ENCODE measurements at regions of chr9 and their contacts with region 1.

Region 1: GRCh38 chr9:114653556-114654159 is 3.9 kb downstream of the TEX53 start:
- DNase-seq: peak; percentile 74 to 88 (median 81)
- ATAC-seq: peak; percentile 100
- H3K4me3 ChIP-seq: no peak overlapping the region
- H3K4me3 Mint-ChIP-seq: no peak overlapping the region
- H3K27ac ChIP-seq: no peak overlapping the region
- H3K27ac Mint-ChIP-seq: no peak overlapping the region
- H3K4me1 ChIP-seq: peaks cover 17% of the 10 kb centered on the region
- H3K4me1 Mint-ChIP-seq: peaks cover 19% of the 10 kb centered on the region
- H3K27me3 ChIP-seq: no peaks in the 10 kb centered on the region
- H3K27me3 Mint-ChIP-seq: no peaks in the 10 kb centered on the region
- CTCF ChIP-seq: peak; percentile 89

Region 2: GRCh38 chr9:114339130-114339908 is 314.3 kb before region 1 on chr9:
- CTCF ChIA-PET with region 1: interaction called, 23 read pairs
- POLR2A ChIA-PET with region 1: no interaction called
- intact Hi-C with region 1: loop called (anchors 2 kb)
- DNase-seq: peak; percentile 27 to 76 (median 52)
- ATAC-seq: peak; percentile 65
- H3K4me3 ChIP-seq: no peak overlapping the region
- H3K4me3 Mint-ChIP-seq: no peak overlapping the region
- H3K27ac ChIP-seq: peak overlapping the region in 1 of 2 experiments; percentile 40
- H3K27ac Mint-ChIP-seq: peak overlapping the region; percentile 45
- H3K4me1 ChIP-seq: no peaks in the 10 kb centered on the region
- H3K4me1 Mint-ChIP-seq: peaks cover 34% of the 10 kb centered on the region
- H3K27me3 ChIP-seq: no peaks in the 10 kb centered on the region
- H3K27me3 Mint-ChIP-seq: no peaks in the 10 kb centered on the region
- CTCF ChIP-seq: peak; percentile 83

Region 3: DNA sequence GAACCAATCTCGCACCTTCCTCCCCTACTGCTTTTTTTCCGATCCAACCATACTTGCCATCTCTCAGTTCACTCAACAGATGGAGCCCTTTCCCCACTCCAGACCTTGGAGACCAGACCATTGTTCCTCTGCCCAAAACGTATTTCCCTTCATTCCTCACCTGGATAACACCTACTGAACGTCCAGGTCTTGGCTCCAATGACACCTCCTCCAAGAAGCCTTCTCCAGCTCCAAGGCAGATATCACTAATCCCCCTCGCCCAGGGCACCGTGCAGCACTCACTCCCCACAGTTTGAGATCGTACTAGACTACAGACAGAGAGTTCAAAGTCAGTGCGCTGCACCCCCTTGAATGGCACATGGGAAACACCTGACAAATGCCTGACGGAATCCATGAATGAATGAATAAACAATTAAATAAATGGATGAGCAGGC is 218.8 kb before region 1 on chr9:
- CTCF ChIA-PET with region 1: interaction called, 8 read pairs
- POLR2A ChIA-PET with region 1: no interaction called
- intact Hi-C with region 1: loop called in 1 of 2 experiments (anchors 1 kb)
- DNase-seq: peak in 3 of 9 experiments; percentile 25 to 43 (median 43)
- ATAC-seq: no peak
- H3K4me3 ChIP-seq: no peak overlapping the region
- H3K4me3 Mint-ChIP-seq: no peak overlapping the region
- H3K27ac ChIP-seq: no peak overlapping the region
- H3K27ac Mint-ChIP-seq: no peak overlapping the region
- H3K4me1 ChIP-seq: no peaks in the 10 kb centered on the region
- H3K4me1 Mint-ChIP-seq: peaks cover 5% of the 10 kb centered on the region
- H3K27me3 ChIP-seq: no peaks in the 10 kb centered on the region
- H3K27me3 Mint-ChIP-seq: no peaks in the 10 kb centered on the region
- CTCF ChIP-seq: no peak

Region 4: DNA sequence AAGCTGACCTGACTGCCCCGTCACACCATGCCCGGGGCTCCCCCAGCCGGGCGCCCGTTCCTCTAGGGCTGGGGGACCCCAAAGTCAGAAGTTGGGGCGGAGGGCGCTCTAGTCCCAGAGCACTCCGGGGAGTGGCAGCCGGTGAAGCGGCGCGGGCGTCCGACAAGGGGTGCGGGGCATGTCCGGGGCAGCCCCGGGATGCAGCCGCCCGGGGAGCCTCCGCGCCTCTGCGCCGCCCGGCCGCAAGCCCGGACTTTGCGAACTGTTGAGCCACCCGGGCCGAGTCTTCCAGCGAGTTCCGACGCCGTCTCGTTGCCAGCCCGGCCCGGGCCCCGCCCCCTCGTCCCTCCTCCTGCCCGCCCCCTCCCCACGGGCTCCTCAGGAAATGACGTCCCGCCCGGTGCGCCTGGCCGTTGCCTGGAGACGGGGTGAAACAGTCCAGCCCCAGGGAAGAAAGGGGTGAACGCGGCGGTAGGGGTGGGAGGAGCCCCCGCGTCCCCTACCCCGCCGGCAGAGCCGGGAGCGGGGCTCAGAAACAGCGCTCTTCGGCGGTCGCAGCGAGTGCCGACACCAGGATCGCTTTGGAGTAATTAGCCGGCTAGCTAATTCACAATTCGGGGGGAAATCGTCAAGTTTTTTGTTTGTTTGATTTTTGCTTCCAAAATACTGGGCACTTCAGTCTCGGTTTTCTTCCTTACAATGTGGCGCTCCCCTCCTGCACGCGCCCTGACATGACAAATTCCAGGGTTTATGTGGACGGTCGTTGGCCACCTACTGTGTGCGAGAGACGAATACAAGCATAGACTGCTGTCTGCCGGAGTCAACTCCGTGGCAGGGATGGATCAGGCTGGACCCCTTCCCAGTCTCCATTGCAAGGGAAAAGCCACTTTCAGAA is 148.2 kb before region 1 on chr9 and contains the start of gene WHRN:
- CTCF ChIA-PET with region 1: interaction called, 24 read pairs
- POLR2A ChIA-PET with region 1: no interaction called
- intact Hi-C with region 1: loop called in 1 of 2 experiments (anchors 1 kb)
- DNase-seq: peak; percentile 84 to 96 (median 91)
- ATAC-seq: peak; percentile 82
- H3K4me3 ChIP-seq: peak within 1 kb of the TSS; percentile 51 to 64
- H3K4me3 Mint-ChIP-seq: peak within 1 kb of the TSS; percentile 86
- H3K27ac ChIP-seq: peak within 1 kb of the TSS; percentile 33 to 45
- H3K27ac Mint-ChIP-seq: peak within 1 kb of the TSS; percentile 77
- H3K4me1 ChIP-seq: peaks cover 13% of the 10 kb centered on the region
- H3K4me1 Mint-ChIP-seq: peaks cover 34% of the 10 kb centered on the region
- H3K27me3 ChIP-seq: peaks cover 0 to 14% of the 10 kb centered on the region in 2 experiments
- H3K27me3 Mint-ChIP-seq: peaks cover 30% of the 10 kb centered on the region
- CTCF ChIP-seq: no peak
- total RNA-seq, gene WHRN: 41.9 to 45.5 TPM

Region 5: GRCh38 chr9:114587385-114588202 is 66.1 kb before region 1 on chr9 and contains the start of gene ATP6V1G1:
- CTCF ChIA-PET with region 1: interaction called, 89 read pairs
- POLR2A ChIA-PET with region 1: interaction called, 21 read pairs
- intact Hi-C with region 1: loop called (anchors 1 kb)
- DNase-seq: peak; percentile 96 to 100 (median 99)
- ATAC-seq: peak; percentile 92
- H3K4me3 ChIP-seq: peak within 1 kb of the TSS; percentile 79 to 93
- H3K4me3 Mint-ChIP-seq: peak within 1 kb of the TSS; percentile 99
- H3K27ac ChIP-seq: peak within 1 kb of the TSS; percentile 88 to 94
- H3K27ac Mint-ChIP-seq: peak within 1 kb of the TSS; percentile 100
- H3K4me1 ChIP-seq: peaks cover 36% of the 10 kb centered on the region
- H3K4me1 Mint-ChIP-seq: peaks cover 47% of the 10 kb centered on the region
- H3K27me3 ChIP-seq: no peaks in the 10 kb centered on the region
- H3K27me3 Mint-ChIP-seq: no peaks in the 10 kb centered on the region
- CTCF ChIP-seq: no peak
- total RNA-seq, gene ATP6V1G1: 141 to 147 TPM

Region 6: DNA sequence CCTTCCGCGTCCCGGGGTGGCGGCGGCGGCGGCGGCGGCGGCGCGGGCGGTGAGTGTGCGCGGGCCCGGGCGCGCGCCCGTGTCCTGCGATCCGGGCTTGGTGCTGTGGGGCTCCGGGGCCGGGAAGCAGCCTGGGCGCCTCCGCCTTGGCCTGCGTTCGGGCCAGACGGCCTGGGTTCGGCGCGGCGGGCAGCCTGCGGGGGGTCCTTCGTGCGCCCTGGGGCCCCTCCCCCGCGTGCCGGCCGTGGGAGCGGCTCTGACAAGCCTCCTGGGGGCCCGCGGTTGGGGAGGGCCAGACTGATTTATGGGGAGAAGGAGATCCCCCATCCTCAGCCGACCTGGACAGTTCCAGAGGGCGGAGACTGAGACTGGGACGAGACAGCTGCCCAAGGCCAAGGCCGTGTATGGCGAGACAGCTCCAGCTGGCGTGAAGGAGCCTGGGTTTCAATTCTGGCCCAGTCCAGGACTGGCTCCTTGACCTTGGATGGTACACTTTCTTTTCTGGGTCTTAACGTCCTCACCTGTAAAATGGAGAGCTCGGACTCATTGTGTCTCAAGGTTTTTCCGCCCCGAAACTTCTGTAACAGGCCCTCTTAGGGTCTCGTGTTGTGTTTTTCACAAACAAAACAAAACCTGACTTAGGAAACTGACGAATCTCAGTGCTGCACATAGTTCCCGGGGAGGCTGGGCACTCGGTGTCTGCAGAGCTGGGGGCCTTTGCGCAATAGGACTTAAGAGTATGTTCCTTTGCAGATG is 42.0 kb before region 1 on chr9:
- CTCF ChIA-PET with region 1: interaction called, 3 read pairs
- POLR2A ChIA-PET with region 1: interaction called, 12 read pairs
- intact Hi-C with region 1: loop called in 1 of 2 experiments (anchors 2 kb)
- DNase-seq: peak in 8 of 9 experiments; percentile 21 to 81 (median 45)
- ATAC-seq: peak; percentile 67
- H3K4me3 ChIP-seq: peak overlapping the region; percentile 80 to 90
- H3K4me3 Mint-ChIP-seq: peak overlapping the region; percentile 91
- H3K27ac ChIP-seq: peak overlapping the region; percentile 77 to 80
- H3K27ac Mint-ChIP-seq: peak overlapping the region; percentile 95
- H3K4me1 ChIP-seq: peaks cover 36% of the 10 kb centered on the region
- H3K4me1 Mint-ChIP-seq: peaks cover 47% of the 10 kb centered on the region
- H3K27me3 ChIP-seq: no peaks in the 10 kb centered on the region
- H3K27me3 Mint-ChIP-seq: no peaks in the 10 kb centered on the region
- CTCF ChIP-seq: no peak

Region 7: DNA sequence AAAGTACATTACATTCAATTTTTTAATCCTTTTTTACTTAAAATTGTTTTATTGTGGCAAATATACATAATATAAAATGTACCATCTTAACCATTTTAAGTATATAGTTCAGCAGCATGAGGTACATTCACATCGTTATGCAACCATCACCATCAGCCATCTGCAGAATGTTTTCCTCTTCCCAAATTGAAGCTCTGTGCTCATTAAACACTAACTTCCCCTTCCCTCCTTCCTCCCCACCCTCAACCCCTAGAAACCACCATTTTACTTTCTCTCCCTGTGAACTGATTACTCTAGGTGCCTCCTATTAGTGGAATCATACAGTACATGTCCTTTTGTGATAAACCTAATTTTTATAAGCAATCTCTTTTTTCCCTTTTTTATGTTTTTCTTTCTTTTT is 11.7 kb before region 1 on chr9:
- CTCF ChIA-PET with region 1: interaction called, 19 read pairs
- POLR2A ChIA-PET with region 1: no interaction called
- intact Hi-C with region 1: no loop called
- DNase-seq: no peak
- ATAC-seq: no peak
- H3K4me3 ChIP-seq: no peak overlapping the region
- H3K4me3 Mint-ChIP-seq: no peak overlapping the region
- H3K27ac ChIP-seq: no peak overlapping the region
- H3K27ac Mint-ChIP-seq: peak overlapping the region; percentile 69
- H3K4me1 ChIP-seq: no peaks in the 10 kb centered on the region
- H3K4me1 Mint-ChIP-seq: no peaks in the 10 kb centered on the region
- H3K27me3 ChIP-seq: no peaks in the 10 kb centered on the region
- H3K27me3 Mint-ChIP-seq: no peaks in the 10 kb centered on the region
- CTCF ChIP-seq: no peak

Region 8: DNA sequence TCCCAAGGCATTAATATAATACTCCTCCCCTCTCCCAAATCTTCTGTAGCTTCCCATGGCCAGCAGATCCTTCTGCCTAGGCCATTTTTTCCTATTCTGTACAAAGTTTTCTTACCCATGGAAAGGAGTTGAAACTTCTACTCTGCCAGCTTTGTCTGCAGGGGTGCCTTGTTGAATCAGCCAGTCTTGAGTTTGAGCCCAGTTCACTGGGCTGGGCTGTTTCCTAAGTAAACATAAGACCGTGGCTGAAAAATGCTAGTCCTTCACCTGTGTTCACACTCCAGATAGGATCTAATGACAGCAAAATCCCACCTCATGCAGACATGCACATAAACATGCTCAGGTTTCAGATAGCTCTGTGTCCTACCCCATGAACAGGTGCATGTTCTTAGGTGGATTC is 17.9 kb after region 1 on chr9:
- CTCF ChIA-PET with region 1: no interaction called
- POLR2A ChIA-PET with region 1: no interaction called
- intact Hi-C with region 1: no loop called
- DNase-seq: no peak
- ATAC-seq: no peak
- H3K4me3 ChIP-seq: no peak overlapping the region
- H3K4me3 Mint-ChIP-seq: no peak overlapping the region
- H3K27ac ChIP-seq: no peak overlapping the region
- H3K27ac Mint-ChIP-seq: no peak overlapping the region
- H3K4me1 ChIP-seq: no peaks in the 10 kb centered on the region
- H3K4me1 Mint-ChIP-seq: no peaks in the 10 kb centered on the region
- H3K27me3 ChIP-seq: no peaks in the 10 kb centered on the region
- H3K27me3 Mint-ChIP-seq: peaks cover 7% of the 10 kb centered on the region
- CTCF ChIP-seq: no peak

Measured in CD8-positive, alpha-beta T cell (primary cell).